ENCODE measurements at regions of chr22 and their contacts with region 1.

Region 1: GRCh38 chr22:30089655-30089974 is 9.4 kb downstream of the HORMAD2 start:
- DNase-seq: no peak
- ATAC-seq: no peak
- H3K4me3 Mint-ChIP-seq: no peak overlapping the region
- H3K27ac Mint-ChIP-seq: no peak overlapping the region
- H3K4me1 Mint-ChIP-seq: peaks cover 22% of the 10 kb centered on the region
- H3K27me3 Mint-ChIP-seq: peaks cover 2% of the 10 kb centered on the region

Region 2: GRCh38 chr22:29641042-29641699 is 448.4 kb before region 1 on chr22:
- CTCF ChIA-PET with region 1: interaction called, 10 read pairs
- POLR2A ChIA-PET with region 1: no interaction called
- DNase-seq: no peak
- ATAC-seq: no peak
- H3K4me3 Mint-ChIP-seq: no peak overlapping the region
- H3K27ac Mint-ChIP-seq: peak overlapping the region; percentile 26
- H3K4me1 Mint-ChIP-seq: peaks cover 27% of the 10 kb centered on the region
- H3K27me3 Mint-ChIP-seq: no peaks in the 10 kb centered on the region

Region 3: DNA sequence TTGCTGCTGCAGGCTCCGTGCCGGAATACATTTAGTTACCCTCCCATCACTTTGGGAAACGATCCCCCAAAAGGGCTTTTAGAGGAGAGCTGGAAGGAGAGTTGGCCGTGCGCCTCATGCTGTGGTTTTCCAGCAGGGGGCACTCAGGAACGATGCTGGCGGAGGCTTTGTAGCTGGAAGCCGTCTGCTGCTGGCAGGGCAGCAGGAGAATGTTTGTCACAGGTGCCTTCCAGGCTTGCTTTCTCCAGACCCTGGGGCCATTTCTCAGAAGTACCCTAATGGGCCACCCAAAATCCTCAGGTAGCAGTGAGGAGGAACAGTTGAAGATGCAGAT is 399.8 kb before region 1 on chr22:
- CTCF ChIA-PET with region 1: interaction called, 17 read pairs
- POLR2A ChIA-PET with region 1: no interaction called
- DNase-seq: peak; percentile 53
- ATAC-seq: no peak
- H3K4me3 Mint-ChIP-seq: no peak overlapping the region
- H3K27ac Mint-ChIP-seq: no peak overlapping the region
- H3K4me1 Mint-ChIP-seq: no peaks in the 10 kb centered on the region
- H3K27me3 Mint-ChIP-seq: no peaks in the 10 kb centered on the region

Region 4: DNA sequence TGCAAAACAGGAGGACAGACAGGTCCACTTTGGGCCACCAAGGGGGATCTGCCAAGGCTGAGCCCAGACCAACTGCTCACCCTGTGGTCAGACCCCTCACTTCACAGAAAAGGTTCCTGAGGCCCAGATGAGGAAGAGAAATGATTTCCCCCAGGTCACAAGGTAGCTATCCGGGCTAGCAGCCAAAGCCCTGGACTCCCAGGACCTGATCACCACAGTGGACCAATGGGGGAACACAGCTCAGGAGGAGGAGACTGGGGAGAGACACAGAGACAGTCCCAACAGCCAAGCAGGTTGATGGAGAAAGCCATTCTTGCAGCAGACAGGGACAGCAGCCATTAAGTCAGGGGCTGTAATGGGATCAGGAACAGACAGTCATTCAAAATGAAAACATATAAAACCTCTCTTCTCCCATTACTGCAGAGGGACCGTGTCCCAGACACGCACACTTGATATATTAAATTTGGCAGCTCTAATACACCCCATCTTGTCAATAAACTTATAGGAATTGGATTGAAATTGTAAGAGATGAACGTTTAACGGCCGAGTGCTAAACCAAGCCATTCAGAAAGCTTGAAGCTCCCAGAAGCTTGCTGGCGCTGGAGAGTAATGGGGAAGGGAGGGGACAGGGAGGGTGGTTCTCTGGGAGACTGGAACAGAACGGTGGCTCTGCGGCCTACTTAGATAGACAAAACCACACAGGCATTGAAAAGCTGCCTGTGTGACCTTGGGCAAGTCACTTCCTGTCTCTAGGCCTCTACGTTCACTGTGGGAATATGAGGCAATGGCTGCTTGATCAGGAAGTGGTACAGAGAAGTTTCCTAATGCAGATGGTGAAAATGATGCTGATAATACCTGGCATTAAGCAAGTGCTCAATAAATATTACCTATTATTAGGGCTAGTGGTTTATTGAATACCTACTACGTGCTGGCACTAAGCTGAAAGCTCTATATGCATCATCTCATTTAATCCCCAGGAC is 338.8 kb before region 1 on chr22:
- CTCF ChIA-PET with region 1: no interaction called
- POLR2A ChIA-PET with region 1: no interaction called
- DNase-seq: peak; percentile 61
- ATAC-seq: peak; percentile 87
- H3K4me3 Mint-ChIP-seq: no peak overlapping the region
- H3K27ac Mint-ChIP-seq: peak overlapping the region; percentile 88
- H3K4me1 Mint-ChIP-seq: peaks cover 30% of the 10 kb centered on the region
- H3K27me3 Mint-ChIP-seq: no peaks in the 10 kb centered on the region

Measured in activated CD8-positive, alpha-beta T cell treated with anti-CD3 and anti-CD28 coated beads, Interleukin-2, amount 10 ng/mL, durations not matched to agents 7 days and 5 days (primary cell).